Activated B cell treated with CpG ODN at 0.5 μM for 24 hours (primary cell): ENCODE measurements at regions of chr5 and their contacts with region 1.

Region 1: DNA sequence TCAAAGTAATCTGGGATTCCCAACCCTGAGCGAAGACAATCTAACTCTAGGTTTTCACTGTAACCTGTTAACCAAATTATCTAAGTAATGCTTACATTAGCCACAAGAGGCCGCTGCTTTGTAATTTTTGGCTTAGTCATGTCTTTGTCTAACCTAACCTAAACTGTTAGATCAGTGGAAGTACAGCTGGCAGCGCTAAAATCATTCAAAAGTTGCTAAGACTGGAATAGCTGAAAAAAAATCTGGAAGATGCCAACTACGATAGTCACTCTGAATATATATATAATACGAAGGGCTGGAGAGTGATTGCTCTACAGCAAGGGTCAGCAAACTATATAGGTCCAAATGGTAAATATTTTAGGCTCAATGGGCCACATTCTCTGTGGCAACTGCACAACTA is 60.2 kb downstream of the FBXO38 start:
- DNase-seq: no peak
- ATAC-seq: peak; percentile 67
- H3K4me3 Mint-ChIP-seq: no peak overlapping the region
- H3K27ac Mint-ChIP-seq: no peak overlapping the region
- H3K4me1 Mint-ChIP-seq: no peaks in the 10 kb centered on the region
- H3K27me3 Mint-ChIP-seq: no peaks in the 10 kb centered on the region
- CTCF ChIP-seq: no peak

Region 2: DNA sequence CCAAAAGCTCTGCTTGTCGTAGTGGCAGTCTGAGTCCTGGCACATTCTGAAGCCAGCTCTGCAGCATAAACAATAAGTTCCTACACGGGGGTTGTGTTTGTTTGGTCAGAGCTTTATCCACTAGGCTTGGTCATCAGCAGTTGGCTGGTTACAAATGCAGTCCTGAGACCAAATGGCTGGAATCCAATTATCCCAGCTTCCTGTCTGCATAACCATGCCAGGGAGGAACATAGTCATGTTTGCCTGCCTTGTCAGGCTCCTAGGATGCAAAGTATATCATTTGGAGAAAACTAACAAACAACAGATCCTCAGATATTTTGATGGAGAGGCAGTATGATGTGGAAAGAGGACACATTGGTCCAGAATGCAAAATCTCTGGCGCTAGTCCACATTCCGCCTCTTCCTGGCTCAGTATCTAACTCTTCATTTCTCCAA is 25.5 kb after region 1 on chr5:
- CTCF ChIA-PET with region 1: no interaction called
- POLR2A ChIA-PET with region 1: no interaction called
- intact Hi-C with region 1: no loop called
- DNase-seq: no peak
- ATAC-seq: no peak
- H3K4me3 Mint-ChIP-seq: no peak overlapping the region
- H3K27ac Mint-ChIP-seq: no peak overlapping the region
- H3K4me1 Mint-ChIP-seq: no peaks in the 10 kb centered on the region
- H3K27me3 Mint-ChIP-seq: no peaks in the 10 kb centered on the region
- CTCF ChIP-seq: no peak

Region 3: DNA sequence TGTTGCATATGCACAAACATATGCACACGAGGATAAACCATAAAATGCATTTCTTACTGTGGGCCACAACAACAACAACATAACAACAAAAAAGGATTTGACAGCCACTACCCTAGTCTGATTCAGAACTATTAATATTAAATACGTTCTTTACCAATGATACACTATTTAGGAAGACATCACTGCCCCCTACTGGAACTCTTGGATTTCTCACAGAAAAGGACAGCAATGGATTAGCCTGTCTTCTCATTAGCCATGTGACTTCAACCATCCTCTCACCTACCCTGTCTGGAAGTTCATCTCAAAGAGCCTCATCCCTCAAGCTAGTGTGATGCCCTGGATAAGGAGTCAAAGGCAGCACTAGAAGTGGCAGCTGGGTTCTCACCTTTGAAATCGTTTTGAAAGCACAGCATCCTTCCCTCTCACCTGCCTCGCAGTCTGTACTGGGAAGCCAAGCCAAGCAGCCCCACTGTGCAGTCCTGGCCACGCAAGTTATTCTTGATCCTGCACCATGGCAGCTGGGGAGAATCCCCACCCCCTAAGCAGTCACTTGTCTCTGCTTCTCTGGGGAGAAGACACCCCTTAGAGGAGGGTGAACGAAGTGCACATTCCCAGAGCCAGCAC is 554.3 kb after region 1 on chr5:
- CTCF ChIA-PET with region 1: interaction called, 5 read pairs
- POLR2A ChIA-PET with region 1: no interaction called
- intact Hi-C with region 1: loop called (anchors 1 kb)
- DNase-seq: no peak
- ATAC-seq: peak; percentile 52
- H3K4me3 Mint-ChIP-seq: no peak overlapping the region
- H3K27ac Mint-ChIP-seq: no peak overlapping the region
- H3K4me1 Mint-ChIP-seq: no peaks in the 10 kb centered on the region
- H3K27me3 Mint-ChIP-seq: peaks cover 23% of the 10 kb centered on the region
- CTCF ChIP-seq: no peak

Region 4: DNA sequence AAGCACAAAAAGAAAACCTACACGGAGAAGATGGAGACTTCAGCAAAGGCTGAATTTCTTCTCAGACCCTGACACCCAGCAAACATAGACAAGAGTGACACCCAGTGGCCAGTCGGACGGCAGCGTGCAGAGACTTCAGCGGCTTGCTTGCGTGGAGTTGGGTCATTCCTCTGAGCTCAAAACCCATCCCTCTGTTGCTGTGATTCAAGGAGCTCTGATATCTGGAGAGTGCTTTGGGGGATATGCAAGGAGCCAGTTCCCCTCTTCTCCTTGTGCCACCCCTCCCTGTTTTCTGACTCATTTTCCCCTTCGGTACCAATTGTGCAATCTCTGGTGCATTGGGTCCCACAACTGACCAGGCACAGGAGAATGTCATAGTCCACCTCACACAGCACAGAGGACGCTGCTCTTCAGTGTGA is 591.4 kb after region 1 on chr5:
- CTCF ChIA-PET with region 1: interaction called, 30 read pairs
- POLR2A ChIA-PET with region 1: no interaction called
- intact Hi-C with region 1: loop called (anchors 1 kb)
- DNase-seq: peak; percentile 30
- ATAC-seq: peak; percentile 79
- H3K4me3 Mint-ChIP-seq: no peak overlapping the region
- H3K27ac Mint-ChIP-seq: no peak overlapping the region
- H3K4me1 Mint-ChIP-seq: no peaks in the 10 kb centered on the region
- H3K27me3 Mint-ChIP-seq: peaks cover 16% of the 10 kb centered on the region
- CTCF ChIP-seq: no peak

Region 5: GRCh38 chr5:149114403-149115312 is 670.7 kb after region 1 on chr5:
- CTCF ChIA-PET with region 1: interaction called, 6 read pairs
- POLR2A ChIA-PET with region 1: no interaction called
- intact Hi-C with region 1: loop called (anchors 1 kb)
- DNase-seq: no peak
- ATAC-seq: peak; percentile 45
- H3K4me3 Mint-ChIP-seq: no peak overlapping the region
- H3K27ac Mint-ChIP-seq: no peak overlapping the region
- H3K4me1 Mint-ChIP-seq: no peaks in the 10 kb centered on the region
- H3K27me3 Mint-ChIP-seq: peaks cover 23% of the 10 kb centered on the region
- CTCF ChIP-seq: no peak